ENCODE measurements at regions of chrX and their contacts with region 1.

Region 1: DNA sequence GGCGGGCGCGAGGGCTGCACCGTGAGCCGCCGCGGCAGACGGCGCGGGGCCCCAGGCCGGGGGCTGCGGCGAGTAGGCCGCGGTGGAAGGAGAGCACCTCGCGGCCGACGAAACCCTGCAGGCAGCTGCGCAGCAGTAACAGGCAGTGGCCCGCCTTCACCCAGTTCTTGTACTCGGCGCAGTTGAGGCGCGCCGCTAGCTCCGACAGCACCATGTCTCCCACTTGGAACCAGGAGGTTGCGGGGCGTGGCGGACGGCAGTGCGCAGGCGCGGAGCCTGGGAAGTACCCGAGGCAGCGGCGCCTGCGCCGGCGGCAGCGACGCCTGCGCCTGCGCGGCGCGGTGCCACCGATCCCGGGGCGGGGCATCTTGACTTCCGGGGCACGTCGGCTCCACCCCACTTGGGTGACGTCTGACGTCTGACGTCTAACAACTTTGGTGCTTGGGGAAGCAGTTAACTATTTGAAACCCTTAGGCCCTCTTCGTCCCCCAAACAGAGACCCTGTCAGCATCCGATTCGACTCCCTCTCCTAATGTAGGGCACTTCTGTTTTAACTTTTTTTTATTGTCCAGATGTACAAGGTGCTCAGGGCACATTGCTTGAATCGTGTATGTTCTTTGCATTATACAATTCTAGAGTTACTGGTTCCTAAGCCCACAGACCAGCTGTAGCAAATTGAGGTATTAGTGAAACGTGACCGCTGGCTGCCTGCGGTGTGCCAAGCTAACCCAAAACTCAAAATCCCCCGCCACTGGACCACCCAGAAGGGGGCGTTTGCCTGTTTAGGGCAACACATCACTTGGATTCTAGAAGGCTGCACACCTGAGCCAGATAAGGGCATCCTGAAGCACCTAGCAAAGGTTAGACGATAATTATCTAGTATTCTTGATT is at the start of gene CXorf38:
- DNase-seq: peak; percentile 69
- ATAC-seq: peak; percentile 90
- H3K4me3 ChIP-seq: peak within 1 kb of the TSS; percentile 69 to 79 (median 75)
- H3K27ac ChIP-seq: peak within 1 kb of the TSS; percentile 54
- H3K4me1 ChIP-seq: peaks cover 11% of the 10 kb centered on the region
- H3K27me3 ChIP-seq: no peaks in the 10 kb centered on the region
- CTCF ChIP-seq: 0 out of 2 replicates have a peak, but pooled peaks have one; percentile 19
- EP300 ChIP-seq: no peak
- POLR2A ChIP-seq: peak; percentile 20 to 81; a peak in 3 of 4 replicates
- RAD21 ChIP-seq: no peak; the same call in 1 of the 2 replicates
- total RNA-seq, gene CXorf38: 6.7 TPM in 2 replicates

Region 2: DNA sequence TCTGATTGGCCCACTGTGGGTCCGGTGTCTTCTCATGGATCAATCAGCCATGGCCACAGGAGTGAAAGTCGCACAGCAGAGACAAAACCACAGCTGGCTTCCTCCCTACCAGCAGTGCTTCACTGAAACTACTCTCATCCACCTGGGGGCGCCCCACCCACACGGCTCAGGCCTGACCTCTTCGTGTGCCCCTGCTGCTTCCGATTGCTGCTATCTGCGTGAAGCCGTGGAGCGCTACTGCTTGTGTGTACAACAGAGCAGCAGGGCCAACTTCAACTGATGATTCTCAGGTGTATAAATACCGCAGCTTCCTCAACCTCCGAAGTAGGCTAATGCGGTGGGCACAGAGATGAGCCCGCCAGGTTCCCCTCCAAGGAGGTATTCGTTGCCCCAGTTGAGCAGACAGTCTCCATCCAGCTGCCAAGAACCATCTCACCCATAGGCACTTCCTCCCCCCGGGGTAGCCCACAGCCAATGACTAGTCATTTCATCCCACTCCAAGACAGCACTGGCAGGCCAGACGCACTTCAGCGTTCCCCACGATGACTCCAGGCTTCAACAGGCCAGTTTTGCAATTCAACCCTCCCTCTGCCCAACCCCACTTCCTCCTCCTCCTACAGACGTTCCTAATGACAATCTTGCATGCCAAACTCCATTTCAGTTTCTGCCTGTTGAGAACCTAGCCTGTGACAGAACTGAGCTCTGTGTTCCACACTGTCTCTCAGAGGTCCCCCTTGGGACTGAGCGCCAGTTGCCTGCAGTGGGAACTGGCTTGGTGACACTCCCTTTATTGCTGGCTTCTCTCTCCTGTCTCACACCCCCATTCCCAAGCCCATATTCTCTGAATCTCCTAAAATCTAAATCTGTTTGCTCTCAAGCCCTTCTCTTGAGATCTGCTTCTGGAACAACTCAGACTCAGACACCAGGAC is 108.1 kb before region 1 on chrX:
- CTCF ChIA-PET with region 1: no interaction called
- POLR2A ChIA-PET with region 1: no interaction called
- in situ Hi-C with region 1: no loop called
- intact Hi-C with region 1: loop called (anchors 10 kb)
- DNase-seq: no peak
- ATAC-seq: peak; percentile 41; the same call in 2 of the 3 replicates
- H3K4me3 ChIP-seq: no peak overlapping the region
- H3K27ac ChIP-seq: no peak overlapping the region
- H3K4me1 ChIP-seq: peaks cover 4% of the 10 kb centered on the region; the same call in 1 of the 2 replicates
- H3K27me3 ChIP-seq: peaks cover 0 to 3% of the 10 kb centered on the region in 2 experiments; a peak in 1 of 5 replicates
- CTCF ChIP-seq: 0 out of 2 replicates have a peak, but pooled peaks have one; percentile 30
- EP300 ChIP-seq: no peak
- POLR2A ChIP-seq: no peak
- RAD21 ChIP-seq: no peak

Region 3: GRCh38 chrX:40580537-40581335 is 66.8 kb before region 1 on chrX and contains the start of gene ATP6AP2:
- CTCF ChIA-PET with region 1: no interaction called
- POLR2A ChIA-PET with region 1: interaction called, 3 read pairs
- in situ Hi-C with region 1: no loop called
- intact Hi-C with region 1: loop called (anchors 10 kb)
- DNase-seq: peak; percentile 89
- ATAC-seq: peak; percentile 98
- H3K4me3 ChIP-seq: peak within 1 kb of the TSS; percentile 65 to 85 (median 83)
- H3K27ac ChIP-seq: peak within 1 kb of the TSS; percentile 26
- H3K4me1 ChIP-seq: peaks cover 46% of the 10 kb centered on the region
- H3K27me3 ChIP-seq: no peaks in the 10 kb centered on the region; a peak in 1 of 5 replicates
- CTCF ChIP-seq: no peak
- EP300 ChIP-seq: no peak
- POLR2A ChIP-seq: peak; percentile 45 to 73; a peak in 3 of 4 replicates
- RAD21 ChIP-seq: no peak
- total RNA-seq, gene ATP6AP2: 29.0 and 55.6 TPM in 2 replicates

Region 4: DNA sequence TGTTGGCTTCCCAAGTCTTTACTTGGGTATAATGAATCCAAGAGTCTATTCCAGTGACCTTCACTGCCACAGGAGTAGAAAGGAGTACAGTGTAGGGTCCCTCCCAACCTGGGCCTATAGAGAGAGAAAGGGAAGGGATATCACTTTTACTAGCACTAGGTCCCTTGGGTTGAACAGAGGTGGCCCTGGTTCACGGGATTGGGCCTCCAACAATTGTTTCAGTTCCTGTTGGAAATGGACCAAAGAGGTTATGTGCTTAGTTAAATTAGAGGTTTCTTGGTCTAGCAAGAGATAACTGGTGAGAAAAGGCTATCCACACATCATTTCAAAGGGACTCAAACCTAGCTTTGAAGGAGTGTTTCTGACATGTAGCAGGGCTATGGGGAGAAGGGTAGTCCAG is 144.9 kb after region 1 on chrX:
- CTCF ChIA-PET with region 1: interaction called, 6 read pairs
- POLR2A ChIA-PET with region 1: no interaction called
- in situ Hi-C with region 1: no loop called
- intact Hi-C with region 1: loop called (anchors 5 kb)
- DNase-seq: no peak
- ATAC-seq: no peak
- H3K4me3 ChIP-seq: no peak overlapping the region
- H3K27ac ChIP-seq: no peak overlapping the region
- H3K4me1 ChIP-seq: 0 out of 2 replicates have a peak, but pooled peaks cover 6% of the 10 kb centered on the region
- H3K27me3 ChIP-seq: no peaks in the 10 kb centered on the region
- CTCF ChIP-seq: no peak
- EP300 ChIP-seq: no peak
- POLR2A ChIP-seq: no peak
- RAD21 ChIP-seq: no peak

Region 5: DNA sequence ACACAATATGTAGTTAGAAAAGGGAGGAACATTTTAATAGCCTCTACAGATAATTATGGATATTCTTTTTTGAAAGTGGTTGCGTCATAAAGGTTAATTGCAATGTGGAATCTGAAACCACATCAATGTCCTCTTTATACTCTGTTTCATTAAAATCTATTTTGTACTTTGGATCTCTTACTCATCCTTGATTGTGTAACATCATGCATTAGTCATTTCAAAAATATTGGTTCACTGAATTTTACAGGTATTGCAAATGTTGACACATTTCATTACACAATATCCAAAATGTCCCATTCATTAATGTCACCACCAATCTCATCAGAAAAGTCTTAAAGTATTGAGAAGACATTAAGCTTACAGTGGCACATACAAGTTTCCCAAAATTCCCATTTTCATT is 375.0 kb after region 1 on chrX:
- CTCF ChIA-PET with region 1: no interaction called
- POLR2A ChIA-PET with region 1: no interaction called
- in situ Hi-C with region 1: no loop called
- intact Hi-C with region 1: loop called (anchors 5 kb)
- DNase-seq: peak; percentile 83
- ATAC-seq: no peak
- H3K4me3 ChIP-seq: no peak overlapping the region
- H3K27ac ChIP-seq: peak overlapping the region; percentile 57
- H3K4me1 ChIP-seq: peaks cover 52% of the 10 kb centered on the region
- H3K27me3 ChIP-seq: no peaks in the 10 kb centered on the region
- CTCF ChIP-seq: no peak
- EP300 ChIP-seq: peak; percentile 73 to 88
- POLR2A ChIP-seq: no peak
- RAD21 ChIP-seq: no peak

Measured in HepG2 (cell line).